T-cell (primary cell): ENCODE measurements at regions of chr17 and their contacts with region 1.

Region 1: DNA sequence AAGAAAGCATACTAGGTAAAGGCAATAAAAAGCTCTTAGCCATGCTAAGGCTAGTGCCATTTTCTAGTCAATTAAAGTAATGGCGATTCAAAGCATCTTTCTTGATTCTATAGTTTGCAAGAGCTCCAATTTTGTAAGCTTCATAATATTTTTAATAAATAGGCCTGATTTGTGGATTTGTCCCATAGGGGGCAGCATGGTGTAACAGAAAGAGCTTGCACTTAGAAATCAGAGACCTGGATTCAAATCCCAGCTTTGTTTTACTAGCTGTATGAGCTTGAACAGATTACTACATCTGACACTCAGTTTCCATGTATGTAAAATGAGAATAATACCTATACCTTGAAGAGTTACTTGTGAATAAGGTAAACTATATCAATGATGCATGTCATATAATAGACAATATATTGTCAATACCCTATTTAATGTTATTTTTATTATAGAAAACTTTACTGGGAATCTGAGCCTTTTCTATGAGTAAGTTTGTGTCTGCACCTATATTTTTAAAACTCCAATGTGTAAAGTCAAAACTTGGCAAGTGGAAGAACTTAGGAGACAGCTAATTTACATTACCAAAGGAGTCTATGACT is 93.6 kb upstream of the NOG start:
- DNase-seq: peak in 13 of 35 experiments; percentile 2 to 51 (median 14)
- ATAC-seq: no peak
- H3K4me3 ChIP-seq: no peak overlapping the region
- H3K4me3 Mint-ChIP-seq: no peak overlapping the region
- H3K27ac ChIP-seq: no peak overlapping the region
- H3K27ac Mint-ChIP-seq: no peak overlapping the region
- H3K4me1 ChIP-seq: no peaks in the 10 kb centered on the region
- H3K4me1 Mint-ChIP-seq: no peaks in the 10 kb centered on the region
- H3K27me3 ChIP-seq: no peaks in the 10 kb centered on the region
- H3K27me3 Mint-ChIP-seq: no peaks in the 10 kb centered on the region

Region 2: DNA sequence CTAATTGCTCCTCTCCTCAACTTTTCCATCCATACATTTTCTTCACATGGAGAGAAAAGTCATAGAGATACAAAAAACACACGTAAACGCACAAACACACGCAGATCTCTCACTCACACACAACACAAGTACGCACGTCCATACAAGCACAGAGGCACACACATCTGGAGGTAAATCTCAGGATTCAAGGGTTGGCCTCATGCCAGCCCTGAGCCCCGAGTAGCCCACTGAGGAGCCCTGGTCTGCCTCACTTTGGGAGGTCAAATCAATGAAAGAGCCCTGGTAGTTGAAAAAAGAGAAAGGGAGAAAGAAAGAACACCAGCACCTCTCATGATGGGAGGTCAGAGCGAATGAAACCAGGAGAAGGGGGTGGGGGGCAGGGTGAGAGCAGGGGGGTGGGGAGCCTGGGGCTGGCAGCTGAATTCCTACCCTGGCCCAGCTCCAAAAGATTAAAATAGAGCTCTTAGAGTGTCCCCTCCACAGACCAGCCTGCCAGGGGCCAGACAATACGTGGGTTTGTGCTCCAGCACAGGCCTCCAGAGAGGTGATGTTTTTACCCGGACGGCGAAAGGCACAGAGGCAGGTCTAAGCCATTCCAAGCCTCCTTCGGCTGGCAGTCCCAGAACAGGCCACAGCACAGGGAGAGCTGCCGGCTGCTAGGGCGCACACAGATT is 21.3 kb after region 1 on chr17:
- CTCF ChIA-PET with region 1: no interaction called
- POLR2A ChIA-PET with region 1: no interaction called
- DNase-seq: no peak
- ATAC-seq: no peak
- H3K4me3 ChIP-seq: no peak overlapping the region
- H3K4me3 Mint-ChIP-seq: no peak overlapping the region
- H3K27ac ChIP-seq: no peak overlapping the region
- H3K27ac Mint-ChIP-seq: no peak overlapping the region
- H3K4me1 ChIP-seq: no peaks in the 10 kb centered on the region
- H3K4me1 Mint-ChIP-seq: no peaks in the 10 kb centered on the region
- H3K27me3 ChIP-seq: peaks cover 0 to 11% of the 10 kb centered on the region in 2 experiments
- H3K27me3 Mint-ChIP-seq: peaks cover 16 to 20% of the 10 kb centered on the region in 2 donors

Region 3: DNA sequence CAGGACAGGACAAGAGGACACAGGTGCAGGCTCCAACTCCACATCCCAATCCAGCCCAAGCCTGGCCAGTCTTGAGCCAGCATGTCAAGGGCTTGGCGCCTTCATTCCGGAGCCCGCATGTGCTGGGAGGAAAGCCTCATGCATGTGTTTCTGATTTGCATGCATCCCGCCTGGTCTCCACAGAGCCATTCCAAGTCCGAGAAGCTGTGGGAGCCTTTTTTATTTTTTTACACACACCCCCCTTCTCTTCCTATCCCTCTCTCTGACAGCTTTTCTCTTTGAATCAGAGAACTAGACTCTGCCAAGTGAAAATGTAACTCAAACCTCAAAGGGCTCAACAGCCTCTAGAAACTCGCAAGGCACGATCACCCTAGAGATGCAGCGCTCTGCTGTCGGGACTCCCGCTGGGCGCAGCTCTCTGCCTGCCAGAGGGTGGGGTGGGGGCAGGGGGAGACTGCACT is 138.7 kb after region 1 on chr17:
- CTCF ChIA-PET with region 1: no interaction called
- POLR2A ChIA-PET with region 1: no interaction called
- DNase-seq: no peak
- ATAC-seq: no peak
- H3K4me3 ChIP-seq: no peak overlapping the region
- H3K4me3 Mint-ChIP-seq: no peak overlapping the region
- H3K27ac ChIP-seq: no peak overlapping the region
- H3K27ac Mint-ChIP-seq: no peak overlapping the region
- H3K4me1 ChIP-seq: peaks cover 3 to 6% of the 10 kb centered on the region in 2 experiments
- H3K4me1 Mint-ChIP-seq: peaks cover 2 to 8% (median 3%) of the 10 kb centered on the region in 3 donors
- H3K27me3 ChIP-seq: peaks cover 0 to 8% of the 10 kb centered on the region in 2 experiments
- H3K27me3 Mint-ChIP-seq: peaks cover 0 to 7% of the 10 kb centered on the region in 2 donors

Region 4: DNA sequence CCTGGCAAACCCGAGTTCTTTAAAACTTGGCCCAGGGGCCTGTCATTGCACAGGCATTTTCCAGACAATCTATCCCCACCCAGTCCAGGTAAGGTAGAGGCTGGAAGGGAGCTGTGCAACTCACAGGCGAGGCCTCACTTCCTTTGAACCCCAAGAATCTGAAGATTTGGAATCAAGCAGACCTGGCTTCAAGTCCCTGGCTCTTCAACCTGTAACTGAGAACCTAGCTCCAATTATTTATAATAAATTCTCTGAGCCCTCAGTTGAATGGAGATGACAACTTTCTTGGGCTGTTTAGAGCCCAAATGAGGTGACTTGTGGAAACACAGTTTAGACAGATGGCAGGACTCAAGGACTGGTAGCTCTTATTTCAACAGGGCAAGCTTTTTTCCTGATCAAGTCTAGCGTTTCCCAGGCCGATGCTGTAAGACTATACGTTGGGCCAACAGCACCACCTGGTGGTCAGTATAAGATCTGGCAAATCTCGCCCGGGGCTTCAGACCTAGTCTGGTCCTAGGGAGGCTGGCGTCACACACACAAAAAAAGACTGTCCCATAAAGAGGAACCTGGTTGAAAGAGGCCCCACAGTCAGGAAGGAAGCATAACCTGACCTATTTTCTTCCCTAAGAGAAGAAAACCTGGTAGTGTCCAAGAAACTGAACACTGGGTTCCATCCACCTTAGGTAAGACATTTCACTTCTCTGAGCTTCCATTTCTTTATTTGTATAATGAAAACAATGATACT is 215.9 kb after region 1 on chr17:
- CTCF ChIA-PET with region 1: interaction called, 21 to 23 read pairs
- POLR2A ChIA-PET with region 1: no interaction called
- DNase-seq: peak; percentile 29 to 86 (median 65)
- ATAC-seq: peak; percentile 88 to 93 (median 90)
- H3K4me3 ChIP-seq: no peak overlapping the region
- H3K4me3 Mint-ChIP-seq: no peak overlapping the region
- H3K27ac ChIP-seq: no peak overlapping the region
- H3K27ac Mint-ChIP-seq: no peak overlapping the region
- H3K4me1 ChIP-seq: peaks cover 0 to 5% of the 10 kb centered on the region in 2 experiments
- H3K4me1 Mint-ChIP-seq: peaks cover 2 to 7% (median 5%) of the 10 kb centered on the region in 3 donors
- H3K27me3 ChIP-seq: peaks cover 0 to 8% of the 10 kb centered on the region in 2 experiments
- H3K27me3 Mint-ChIP-seq: peaks cover 0 to 2% of the 10 kb centered on the region in 2 donors